ENCODE measurements at regions of chr4 and their contacts with region 1.

Region 1: GRCh38 chr4:18813055-18813454 is 791.5 kb upstream of the LCORL start:
- DNase-seq: no peak
- H3K4me3 Mint-ChIP-seq: no peak overlapping the region
- H3K27ac Mint-ChIP-seq: peak overlapping the region; percentile 79
- H3K4me1 Mint-ChIP-seq: peaks cover 16% of the 10 kb centered on the region
- H3K27me3 Mint-ChIP-seq: no peaks in the 10 kb centered on the region
- CTCF ChIP-seq: no peak

Region 2: GRCh38 chr4:18934197-18934596 is 121.1 kb after region 1 on chr4:
- CTCF ChIA-PET with region 1: no interaction called
- intact Hi-C with region 1: loop called (anchors 2 kb)
- DNase-seq: no peak
- H3K4me3 Mint-ChIP-seq: no peak overlapping the region
- H3K27ac Mint-ChIP-seq: no peak overlapping the region
- H3K4me1 Mint-ChIP-seq: peaks cover 25% of the 10 kb centered on the region
- H3K27me3 Mint-ChIP-seq: no peaks in the 10 kb centered on the region
- CTCF ChIP-seq: no peak

Region 3: DNA sequence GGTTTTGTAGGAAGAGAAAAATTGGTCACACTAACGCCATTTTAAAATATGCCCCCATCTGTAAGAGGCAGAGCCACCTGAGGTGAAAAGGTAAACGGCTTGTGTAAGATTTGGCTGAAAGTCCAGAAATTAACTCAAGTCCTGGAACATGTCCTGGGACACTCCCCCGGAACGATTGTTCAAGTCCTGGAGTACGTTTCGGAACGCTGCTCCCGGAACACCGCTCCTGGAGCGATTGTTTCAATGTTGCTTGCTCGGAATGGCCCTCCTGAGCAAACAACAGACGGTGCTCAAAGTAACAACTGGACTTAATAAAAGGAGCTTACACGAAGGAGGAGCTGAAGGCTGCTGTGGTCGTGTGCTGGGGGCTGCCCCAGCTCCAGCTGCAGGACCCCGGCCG is 642.2 kb after region 1 on chr4:
- CTCF ChIA-PET with region 1: no interaction called
- intact Hi-C with region 1: no loop called
- DNase-seq: no peak
- H3K4me3 Mint-ChIP-seq: no peak overlapping the region
- H3K27ac Mint-ChIP-seq: no peak overlapping the region
- H3K4me1 Mint-ChIP-seq: no peaks in the 10 kb centered on the region
- H3K27me3 Mint-ChIP-seq: no peaks in the 10 kb centered on the region
- CTCF ChIP-seq: no peak